ENCODE measurements at regions of chr12 and their contacts with region 1.

Region 1: GRCh38 chr12:26044012-26044383 is 80.8 kb downstream of the BHLHE41 start:
- DNase-seq: no peak
- H3K4me3 ChIP-seq: no peak overlapping the region
- H3K27me3 ChIP-seq: no peaks in the 10 kb centered on the region
- CTCF ChIP-seq: no peak

Region 2: GRCh38 chr12:25769076-25769945 is 274.7 kb before region 1 on chr12:
- CTCF ChIA-PET with region 1: no interaction called
- POLR2A ChIA-PET with region 1: interaction called, 12 read pairs
- DNase-seq: no peak
- H3K4me3 ChIP-seq: no peak overlapping the region
- H3K27me3 ChIP-seq: no peaks in the 10 kb centered on the region
- CTCF ChIP-seq: no peak

Region 3: GRCh38 chr12:25962932-25963525 is 81.0 kb before region 1 on chr12:
- CTCF ChIA-PET with region 1: no interaction called
- POLR2A ChIA-PET with region 1: interaction called, 17 read pairs
- DNase-seq: no peak
- H3K4me3 ChIP-seq: no peak overlapping the region
- H3K27me3 ChIP-seq: no peaks in the 10 kb centered on the region
- CTCF ChIP-seq: no peak